BJ (cell line): ENCODE measurements at regions of chr12 and their contacts with region 1.

Region 1: GRCh38 chr12:72271451-72272090 is 599 bp upstream of the TRHDE start:
- DNase-seq: no peak
- H3K4me3 ChIP-seq: peak overlapping the region; percentile 80
- H3K27me3 ChIP-seq: no peaks in the 10 kb centered on the region
- CTCF ChIP-seq: peak; percentile 37; the same call in 1 of the 2 replicates

Region 2: DNA sequence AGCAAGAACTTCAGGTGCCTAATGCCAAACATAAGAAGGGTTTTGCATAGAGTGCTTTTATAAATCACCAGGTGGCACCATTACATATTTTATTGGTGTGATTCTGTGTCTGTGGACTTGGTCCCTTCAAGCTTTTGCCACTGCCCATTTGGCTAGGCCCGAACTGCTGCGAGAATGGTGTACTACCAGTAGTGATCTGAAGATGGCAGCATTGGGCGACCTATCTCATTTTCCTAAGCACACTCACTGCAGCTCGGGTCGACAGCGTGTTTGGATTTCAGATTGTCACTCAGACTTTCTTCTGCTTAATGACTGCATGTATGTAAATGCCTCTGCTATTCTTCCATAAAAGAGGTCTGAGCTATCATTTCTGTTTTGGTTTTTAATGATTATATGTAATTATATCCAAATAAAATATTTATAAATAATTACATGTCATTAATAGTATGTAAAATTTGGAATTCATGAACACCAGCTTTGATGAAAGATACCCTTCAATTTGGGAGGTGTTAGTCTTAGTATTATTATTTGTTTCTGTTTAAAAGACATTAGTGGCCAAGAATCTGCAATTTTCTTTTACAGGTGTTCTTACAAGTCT is 254.4 kb before region 1 on chr12:
- CTCF ChIA-PET with region 1: interaction called, 15 read pairs
- POLR2A ChIA-PET with region 1: no interaction called
- DNase-seq: peak; percentile 26
- H3K4me3 ChIP-seq: no peak overlapping the region
- H3K27me3 ChIP-seq: peaks cover 3% of the 10 kb centered on the region; the same call in 1 of the 2 replicates
- CTCF ChIP-seq: peak; percentile 77

Region 3: GRCh38 chr12:72236071-72236705 is 35.4 kb before region 1 on chr12:
- CTCF ChIA-PET with region 1: no interaction called
- POLR2A ChIA-PET with region 1: no interaction called
- DNase-seq: no peak
- H3K4me3 ChIP-seq: no peak overlapping the region
- H3K27me3 ChIP-seq: no peaks in the 10 kb centered on the region
- CTCF ChIP-seq: no peak

Region 4: DNA sequence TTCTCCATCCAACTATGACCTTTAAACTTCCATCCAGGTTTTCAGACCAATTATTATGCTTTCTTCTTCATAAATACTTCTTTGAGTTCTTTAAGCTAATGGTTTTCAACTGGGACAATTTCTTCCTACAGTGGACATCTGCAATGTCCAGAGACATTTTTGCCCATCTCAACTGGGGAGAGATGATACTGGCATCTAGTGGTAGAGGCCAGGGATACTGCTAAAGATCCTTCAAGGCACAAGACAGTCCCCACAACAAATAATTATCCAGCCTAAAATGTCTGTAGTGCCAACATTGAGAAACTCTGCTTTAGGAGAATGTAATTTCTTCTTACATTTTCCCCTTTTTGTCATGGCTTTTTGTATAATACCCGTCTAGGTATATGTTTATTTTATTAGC is 11.2 kb after region 1 on chr12:
- CTCF ChIA-PET with region 1: interaction called, 20 read pairs
- POLR2A ChIA-PET with region 1: interaction called, 3 read pairs
- DNase-seq: no peak
- H3K4me3 ChIP-seq: no peak overlapping the region
- H3K27me3 ChIP-seq: no peaks in the 10 kb centered on the region
- CTCF ChIP-seq: peak; percentile 81

Region 5: GRCh38 chr12:72346363-72346944 is 74.9 kb after region 1 on chr12:
- CTCF ChIA-PET with region 1: interaction called, 16 read pairs
- POLR2A ChIA-PET with region 1: no interaction called
- DNase-seq: no peak
- H3K4me3 ChIP-seq: no peak overlapping the region
- H3K27me3 ChIP-seq: no peaks in the 10 kb centered on the region
- CTCF ChIP-seq: peak; percentile 66